ENCODE measurements at regions of chr2 and their contacts with region 1.

Region 1: GRCh38 chr2:121974897-121975661 is 219.6 kb downstream of the TSN start:
- DNase-seq: peak; percentile 91
- H3K4me3 Mint-ChIP-seq: peak overlapping the region; percentile 61
- H3K27ac Mint-ChIP-seq: no peak overlapping the region
- H3K4me1 Mint-ChIP-seq: peaks cover 7% of the 10 kb centered on the region
- H3K27me3 Mint-ChIP-seq: no peaks in the 10 kb centered on the region
- CTCF ChIP-seq: peak; percentile 61

Region 2: GRCh38 chr2:121118951-121119555 is 856.0 kb before region 1 on chr2:
- CTCF ChIA-PET with region 1: no interaction called
- POLR2A ChIA-PET with region 1: no interaction called
- intact Hi-C with region 1: no loop called
- DNase-seq: no peak
- H3K4me3 Mint-ChIP-seq: no peak overlapping the region
- H3K27ac Mint-ChIP-seq: no peak overlapping the region
- H3K4me1 Mint-ChIP-seq: no peaks in the 10 kb centered on the region
- H3K27me3 Mint-ChIP-seq: no peaks in the 10 kb centered on the region
- CTCF ChIP-seq: no peak

Region 3: GRCh38 chr2:121810959-121811853 is 163.9 kb before region 1 on chr2:
- CTCF ChIA-PET with region 1: interaction called, 5 read pairs
- POLR2A ChIA-PET with region 1: interaction called, 4 read pairs
- intact Hi-C with region 1: loop called (anchors 1 kb)
- DNase-seq: peak; percentile 74
- H3K4me3 Mint-ChIP-seq: no peak overlapping the region
- H3K27ac Mint-ChIP-seq: no peak overlapping the region
- H3K4me1 Mint-ChIP-seq: peaks cover 5% of the 10 kb centered on the region
- H3K27me3 Mint-ChIP-seq: no peaks in the 10 kb centered on the region
- CTCF ChIP-seq: peak; percentile 66

Region 4: GRCh38 chr2:122145856-122146255 is 170.8 kb after region 1 on chr2:
- CTCF ChIA-PET with region 1: interaction called, 4 read pairs
- POLR2A ChIA-PET with region 1: no interaction called
- intact Hi-C with region 1: loop called (anchors 2 kb)
- DNase-seq: peak; percentile 9
- H3K4me3 Mint-ChIP-seq: no peak overlapping the region
- H3K27ac Mint-ChIP-seq: no peak overlapping the region
- H3K4me1 Mint-ChIP-seq: no peaks in the 10 kb centered on the region
- H3K27me3 Mint-ChIP-seq: no peaks in the 10 kb centered on the region
- CTCF ChIP-seq: no peak

Region 5: DNA sequence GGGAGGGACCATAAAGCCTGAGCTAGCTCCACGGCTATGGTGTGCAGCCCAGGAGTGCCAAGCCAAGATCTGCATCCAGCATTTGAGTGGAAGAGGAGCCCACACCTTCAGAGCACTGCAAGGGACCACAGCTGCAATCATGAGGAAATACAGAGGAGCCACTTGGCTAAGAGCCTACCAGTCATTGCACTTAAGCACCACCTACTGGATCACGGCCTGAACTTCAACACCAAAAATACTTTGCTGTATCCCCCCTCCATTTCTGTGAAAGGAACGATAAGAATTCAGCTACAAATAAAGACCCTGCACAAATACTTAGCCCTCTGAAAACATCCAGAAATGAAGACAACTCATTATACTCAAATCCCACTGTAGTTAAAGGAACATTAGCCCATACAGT is 325.7 kb after region 1 on chr2:
- CTCF ChIA-PET with region 1: no interaction called
- POLR2A ChIA-PET with region 1: no interaction called
- intact Hi-C with region 1: loop called (anchors 5 kb)
- DNase-seq: peak; percentile 56
- H3K4me3 Mint-ChIP-seq: no peak overlapping the region
- H3K27ac Mint-ChIP-seq: no peak overlapping the region
- H3K4me1 Mint-ChIP-seq: no peaks in the 10 kb centered on the region
- H3K27me3 Mint-ChIP-seq: no peaks in the 10 kb centered on the region
- CTCF ChIP-seq: peak; percentile 23

Region 6: GRCh38 chr2:122451040-122451439 is 476.0 kb after region 1 on chr2:
- CTCF ChIA-PET with region 1: interaction called, 7 read pairs
- POLR2A ChIA-PET with region 1: no interaction called
- intact Hi-C with region 1: loop called (anchors 1 kb)
- DNase-seq: peak; percentile 66
- H3K4me3 Mint-ChIP-seq: no peak overlapping the region
- H3K27ac Mint-ChIP-seq: no peak overlapping the region
- H3K4me1 Mint-ChIP-seq: no peaks in the 10 kb centered on the region
- H3K27me3 Mint-ChIP-seq: no peaks in the 10 kb centered on the region
- CTCF ChIP-seq: peak; percentile 66